Gastrocnemius medialis (tissue), 4 donors: ENCODE measurements at regions of chr1 and their contacts with region 1.

Region 1: DNA sequence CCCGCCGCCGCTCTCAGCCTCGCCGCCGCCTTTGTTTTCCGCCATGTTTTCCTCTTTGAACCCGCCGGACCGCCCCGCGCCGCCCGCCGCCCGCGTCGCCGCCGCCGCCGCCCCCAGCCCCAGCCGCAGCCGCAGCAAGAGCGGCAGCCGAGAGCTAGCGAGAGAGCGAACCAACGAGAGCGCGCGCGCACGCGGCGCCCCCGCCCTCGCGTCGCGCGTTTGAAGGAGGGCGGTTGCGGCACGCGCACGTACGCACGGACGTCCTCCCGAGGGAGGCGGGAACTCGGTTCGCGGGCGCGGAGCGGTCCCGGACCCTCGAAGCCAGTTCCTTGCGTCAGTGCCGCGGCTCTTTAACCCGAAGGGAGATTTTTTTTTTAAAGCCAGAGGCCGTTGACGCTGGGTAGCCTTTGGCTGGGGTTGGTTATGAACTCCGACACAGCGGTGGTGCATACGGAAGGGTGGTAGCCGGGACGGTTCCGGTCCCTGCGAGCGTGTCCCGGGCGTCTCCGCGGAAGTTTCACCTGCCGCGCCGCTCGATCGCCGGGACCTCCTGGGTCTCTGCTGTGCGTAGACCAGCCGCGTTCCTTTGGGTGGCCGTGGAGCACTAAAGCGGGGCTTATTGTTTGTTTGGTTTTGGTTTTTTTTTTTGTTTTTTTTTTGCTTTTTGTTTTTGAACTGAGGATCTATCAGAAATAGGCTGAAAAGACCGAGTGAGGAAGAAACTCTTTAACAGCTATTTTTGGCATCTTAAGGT is at the start of gene TRIM33:
- DNase-seq: peak; percentile 81 to 91
- ATAC-seq: peak; percentile 86 to 87
- H3K4me3 ChIP-seq: peak within 1 kb of the TSS; percentile 69 to 100 (median 90)
- H3K27ac ChIP-seq: peak within 1 kb of the TSS; percentile 88 to 99 (median 96)
- H3K4me1 ChIP-seq: peaks cover 41 to 42% of the 10 kb centered on the region in 2 donors
- H3K27me3 ChIP-seq: no peaks in the 10 kb centered on the region
- CTCF ChIP-seq: peak in 1 of 5 experiments; percentile 18
- POLR2A ChIP-seq: peak; percentile 87 to 90
- total RNA-seq, gene TRIM33: 17.1 to 33.0 (median 25.3) TPM

Region 2: GRCh38 chr1:113804421-113805255 is 706.6 kb before region 1 on chr1:
- in situ Hi-C with region 1: no loop called
- intact Hi-C with region 1: loop called (anchors 10 kb)
- DNase-seq: no peak
- ATAC-seq: peak; percentile 63 to 67
- H3K4me3 ChIP-seq: peak overlapping the region in 1 of 4 donors; percentile 5
- H3K27ac ChIP-seq: peak overlapping the region in 3 of 4 donors; percentile 22 to 57 (median 34)
- H3K4me1 ChIP-seq: peaks cover 49 to 81% of the 10 kb centered on the region in 2 donors
- H3K27me3 ChIP-seq: no peaks in the 10 kb centered on the region
- CTCF ChIP-seq: no peak
- POLR2A ChIP-seq: no peak

Region 3: DNA sequence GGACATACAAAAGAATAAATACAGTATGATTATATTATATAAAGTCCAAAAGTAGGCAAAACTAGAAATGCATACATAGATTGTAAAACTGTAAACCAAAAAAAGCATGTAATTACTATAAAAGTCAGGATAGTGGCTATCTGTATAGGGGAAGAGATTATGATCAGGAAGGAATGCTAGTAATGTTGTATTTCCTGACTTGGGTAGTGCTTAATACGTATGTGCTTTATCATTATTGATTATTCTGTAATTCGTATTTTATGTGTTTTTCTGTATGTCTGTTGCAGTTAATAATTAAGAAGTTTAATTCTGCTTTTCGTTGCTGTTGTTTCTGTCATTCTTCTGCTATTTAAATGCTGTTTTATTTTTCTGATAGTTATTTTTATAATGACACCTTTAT is 29.0 kb after region 1 on chr1:
- in situ Hi-C with region 1: no loop called
- intact Hi-C with region 1: no loop called
- DNase-seq: no peak
- ATAC-seq: no peak
- H3K4me3 ChIP-seq: no peak overlapping the region
- H3K27ac ChIP-seq: no peak overlapping the region
- H3K4me1 ChIP-seq: no peaks in the 10 kb centered on the region
- H3K27me3 ChIP-seq: no peaks in the 10 kb centered on the region
- CTCF ChIP-seq: no peak
- POLR2A ChIP-seq: no peak

Region 4: GRCh38 chr1:114581335-114582287 is 70.4 kb after region 1 on chr1 and contains the start of gene BCAS2:
- in situ Hi-C with region 1: loop called in 1 of 4 experiments (anchors 5 kb)
- intact Hi-C with region 1: loop called (anchors 1 kb)
- DNase-seq: peak; percentile 95 to 97
- ATAC-seq: peak; percentile 99
- H3K4me3 ChIP-seq: peak within 1 kb of the TSS; percentile 64 to 75 (median 70)
- H3K27ac ChIP-seq: peak within 1 kb of the TSS; percentile 87 to 95 (median 92)
- H3K4me1 ChIP-seq: peaks cover 16 to 25% of the 10 kb centered on the region in 2 donors
- H3K27me3 ChIP-seq: no peaks in the 10 kb centered on the region
- CTCF ChIP-seq: no peak
- POLR2A ChIP-seq: peak; percentile 88 to 89
- total RNA-seq, gene BCAS2: 23.7 to 32.8 (median 25.2) TPM

Region 5: DNA sequence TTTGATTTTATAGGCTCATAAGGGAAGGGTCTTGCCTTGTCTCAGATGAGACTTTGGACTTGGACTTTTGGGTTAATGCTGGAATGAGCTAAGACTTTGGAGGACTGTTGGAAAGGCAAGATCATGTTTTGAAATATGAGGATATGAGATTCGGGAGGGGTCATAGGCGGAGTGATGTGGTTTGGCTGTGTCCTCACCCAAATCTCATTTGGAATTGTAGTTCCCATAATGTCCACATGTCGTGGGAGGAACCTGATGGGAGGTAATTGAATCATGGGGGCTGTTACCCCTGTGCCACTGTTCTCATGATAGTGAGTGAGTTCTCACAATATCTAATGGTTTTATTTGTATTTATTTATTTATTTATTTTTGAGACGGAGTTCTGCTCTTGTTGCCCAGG is 253.5 kb after region 1 on chr1:
- in situ Hi-C with region 1: loop called in 1 of 4 experiments (anchors 10 kb)
- intact Hi-C with region 1: no loop called
- DNase-seq: no peak
- ATAC-seq: no peak
- H3K4me3 ChIP-seq: no peak overlapping the region
- H3K27ac ChIP-seq: no peak overlapping the region
- H3K4me1 ChIP-seq: no peaks in the 10 kb centered on the region
- H3K27me3 ChIP-seq: no peaks in the 10 kb centered on the region
- CTCF ChIP-seq: no peak
- POLR2A ChIP-seq: no peak